ENCODE measurements at regions of chr20 and their contacts with region 1.

Region 1: DNA sequence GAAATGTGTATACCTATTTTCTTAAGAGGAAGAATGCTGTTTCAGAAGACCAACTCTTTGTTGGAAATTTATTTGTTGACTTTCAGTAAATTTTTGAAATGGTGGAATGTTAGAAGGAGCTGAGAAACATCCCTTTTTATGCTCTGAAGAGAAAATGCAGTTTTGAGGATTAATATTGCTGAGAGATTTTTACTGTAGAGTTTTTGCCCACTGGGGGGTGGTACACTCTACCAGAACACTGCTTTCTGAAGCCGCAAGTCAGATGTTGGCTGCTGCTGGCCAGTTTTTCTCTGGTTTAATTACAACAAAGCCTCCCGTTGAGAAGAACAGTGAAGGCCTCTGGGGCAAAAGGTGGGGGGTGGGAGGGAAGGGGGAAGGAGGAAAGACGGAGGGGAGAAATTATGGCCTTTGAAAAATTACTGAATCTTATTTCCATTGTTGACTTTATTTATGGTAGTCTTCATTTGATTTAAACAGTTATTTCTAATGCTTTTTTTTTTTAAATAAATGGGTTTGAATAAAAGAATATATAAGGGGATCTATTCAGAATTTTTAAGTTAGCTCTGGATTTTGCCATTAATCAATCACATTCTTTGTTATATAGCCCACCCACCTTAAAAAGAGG is 3.0 kb downstream of the FLRT3 start:
- DNase-seq: peak; percentile 37
- H3K4me3 ChIP-seq: peak overlapping the region in 1 of 2 experiments; percentile 33; a peak in 2 of 4 replicates
- H3K27ac ChIP-seq: peak overlapping the region in 1 of 2 experiments; percentile 78; a peak in 1 of 4 replicates
- H3K4me1 ChIP-seq: peaks cover 0 to 5% of the 10 kb centered on the region in 2 experiments; a peak in 2 of 4 replicates
- H3K27me3 ChIP-seq: no peaks in the 10 kb centered on the region
- CTCF ChIP-seq: peak; percentile 63
- EP300 ChIP-seq: no peak
- RAD21 ChIP-seq: peak; percentile 86

Region 2: GRCh38 chr20:14319704-14320103 is 14.7 kb before region 1 on chr20:
- CTCF ChIA-PET with region 1: interaction called, 13 read pairs
- POLR2A ChIA-PET with region 1: no interaction called
- DNase-seq: no peak
- H3K4me3 ChIP-seq: no peak overlapping the region
- H3K27ac ChIP-seq: no peak overlapping the region
- H3K4me1 ChIP-seq: no peaks in the 10 kb centered on the region; a peak in 1 of 4 replicates
- H3K27me3 ChIP-seq: no peaks in the 10 kb centered on the region
- CTCF ChIP-seq: no peak
- EP300 ChIP-seq: no peak
- RAD21 ChIP-seq: no peak